H1 (cell line): ENCODE measurements at regions of chr7 and their contacts with region 1.

Region 1: GRCh38 chr7:1193593-1194424 is 33.8 kb upstream of the ZFAND2A start:
- DNase-seq: peak in 1 of 2 experiments; percentile 78
- H3K4me3 ChIP-seq: no peak overlapping the region
- H3K27ac ChIP-seq: no peak overlapping the region
- H3K4me1 ChIP-seq: no peaks in the 10 kb centered on the region
- H3K27me3 ChIP-seq: no peaks in the 10 kb centered on the region
- CTCF ChIP-seq: peak; percentile 75 to 82 (median 76)
- EP300 ChIP-seq: no peak
- POLR2A ChIP-seq: no peak
- RAD21 ChIP-seq: peak; percentile 88 to 89

Region 2: GRCh38 chr7:945556-946255 is 248.1 kb before region 1 on chr7:
- CTCF ChIA-PET with region 1: no interaction called
- POLR2A ChIA-PET with region 1: no interaction called
- DNase-seq: peak; percentile 49 to 86
- H3K4me3 ChIP-seq: peak overlapping the region in 2 of 4 experiments; percentile 11 to 39; a peak in 3 of 8 replicates
- H3K27ac ChIP-seq: peak overlapping the region; percentile 72; the same call in 1 of the 2 replicates
- H3K4me1 ChIP-seq: peaks cover 0 to 26% (median 18%) of the 10 kb centered on the region in 4 experiments; a peak in 6 of 7 replicates
- H3K27me3 ChIP-seq: peaks cover 0 to 4% (median 0%) of the 10 kb centered on the region in 4 experiments; a peak in 2 of 7 replicates
- CTCF ChIP-seq: no peak
- EP300 ChIP-seq: 0 out of 3 replicates have a peak, but pooled peaks of 1 of the 2 experiments have one; percentile 49
- POLR2A ChIP-seq: peak in 1 of 2 experiments; percentile 74; a peak in 2 of 3 replicates
- RAD21 ChIP-seq: 0 out of 4 replicates have a peak, but pooled peaks have one; percentile 1 to 15

Region 3: DNA sequence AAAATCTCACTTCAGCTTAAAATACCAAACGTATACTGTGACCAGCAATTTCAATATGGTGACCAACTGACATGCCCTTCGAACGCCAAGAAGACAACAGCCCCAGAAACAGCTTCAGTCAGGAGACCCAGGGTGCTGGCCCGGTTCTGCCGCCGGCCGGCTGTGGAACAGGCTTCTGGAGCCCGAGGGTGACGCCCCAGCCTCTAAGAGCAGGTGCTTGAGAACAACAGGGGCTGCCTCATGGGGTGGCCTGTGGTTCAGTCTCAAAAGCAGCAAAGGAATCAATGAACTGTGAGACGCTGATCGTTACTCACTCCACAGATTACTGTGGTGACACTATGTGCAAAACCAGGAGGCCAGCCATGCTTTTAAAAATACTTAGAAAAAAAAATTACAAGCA is 88.6 kb before region 1 on chr7:
- CTCF ChIA-PET with region 1: no interaction called
- POLR2A ChIA-PET with region 1: no interaction called
- DNase-seq: no peak
- H3K4me3 ChIP-seq: no peak overlapping the region
- H3K27ac ChIP-seq: no peak overlapping the region
- H3K4me1 ChIP-seq: no peaks in the 10 kb centered on the region
- H3K27me3 ChIP-seq: no peaks in the 10 kb centered on the region
- CTCF ChIP-seq: no peak
- EP300 ChIP-seq: no peak
- POLR2A ChIP-seq: no peak
- RAD21 ChIP-seq: no peak

Region 4: GRCh38 chr7:1151653-1152425 is 42.0 kb before region 1 on chr7:
- CTCF ChIA-PET with region 1: no interaction called
- POLR2A ChIA-PET with region 1: no interaction called
- DNase-seq: no peak
- H3K4me3 ChIP-seq: no peak overlapping the region
- H3K27ac ChIP-seq: no peak overlapping the region
- H3K4me1 ChIP-seq: no peaks in the 10 kb centered on the region
- H3K27me3 ChIP-seq: no peaks in the 10 kb centered on the region
- CTCF ChIP-seq: no peak
- EP300 ChIP-seq: no peak
- POLR2A ChIP-seq: no peak
- RAD21 ChIP-seq: no peak

Region 5: GRCh38 chr7:1181640-1182039 is 12.2 kb before region 1 on chr7:
- CTCF ChIA-PET with region 1: interaction called, 47 read pairs
- POLR2A ChIA-PET with region 1: no interaction called
- DNase-seq: no peak
- H3K4me3 ChIP-seq: no peak overlapping the region
- H3K27ac ChIP-seq: no peak overlapping the region
- H3K4me1 ChIP-seq: no peaks in the 10 kb centered on the region
- H3K27me3 ChIP-seq: no peaks in the 10 kb centered on the region; a peak in 1 of 7 replicates
- CTCF ChIP-seq: no peak
- EP300 ChIP-seq: no peak
- POLR2A ChIP-seq: no peak
- RAD21 ChIP-seq: no peak

Region 6: DNA sequence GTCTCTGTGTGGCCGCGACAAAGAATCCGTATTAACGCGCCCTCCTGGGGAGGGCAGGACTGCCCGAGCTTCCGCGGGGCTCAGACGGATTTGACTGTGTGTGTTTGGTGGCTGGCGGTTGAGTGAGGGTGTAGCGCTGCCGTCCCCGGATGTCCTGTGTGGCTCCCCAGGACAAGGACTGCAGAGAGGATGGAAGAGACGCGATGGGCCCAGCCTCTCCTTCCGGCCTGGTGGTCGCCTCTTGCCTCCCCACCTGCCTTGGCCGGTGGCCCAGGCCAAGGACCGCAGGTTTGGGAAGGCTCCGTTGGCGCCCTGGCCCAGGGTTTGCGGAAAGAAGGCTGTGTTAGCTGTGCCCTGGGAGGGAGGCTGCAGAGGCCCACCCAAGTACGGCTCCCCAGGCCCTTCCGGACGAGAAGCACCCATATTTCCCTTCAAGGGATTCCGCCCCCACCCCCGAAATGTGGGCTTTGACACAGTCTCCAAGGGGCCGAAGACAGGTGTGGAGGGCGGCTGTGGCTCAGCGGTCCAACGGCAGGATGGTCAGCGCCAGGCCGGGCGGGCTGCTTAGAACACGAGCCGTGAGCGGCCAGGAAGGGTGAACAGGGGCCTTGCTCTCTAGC is 41.2 kb after region 1 on chr7:
- CTCF ChIA-PET with region 1: no interaction called
- POLR2A ChIA-PET with region 1: no interaction called
- DNase-seq: peak; percentile 49 to 75
- H3K4me3 ChIP-seq: peak overlapping the region in 2 of 4 experiments; percentile 7 to 10; a peak in 2 of 8 replicates
- H3K27ac ChIP-seq: no peak overlapping the region
- H3K4me1 ChIP-seq: peaks cover 6 to 36% (median 26%) of the 10 kb centered on the region in 4 experiments
- H3K27me3 ChIP-seq: peaks cover 93 to 97% (median 96%) of the 10 kb centered on the region in 4 experiments
- CTCF ChIP-seq: no peak
- EP300 ChIP-seq: no peak
- POLR2A ChIP-seq: no peak
- RAD21 ChIP-seq: no peak

Region 7: GRCh38 chr7:1412322-1413261 is 218.8 kb after region 1 on chr7:
- CTCF ChIA-PET with region 1: interaction called, 11 read pairs
- POLR2A ChIA-PET with region 1: no interaction called
- DNase-seq: peak; percentile 70 to 99
- H3K4me3 ChIP-seq: peak overlapping the region in 3 of 4 experiments; percentile 14 to 42 (median 23); a peak in 5 of 8 replicates
- H3K27ac ChIP-seq: no peak overlapping the region
- H3K4me1 ChIP-seq: peaks cover 0 to 3% (median 1%) of the 10 kb centered on the region in 4 experiments; a peak in 4 of 7 replicates
- H3K27me3 ChIP-seq: peaks cover 0 to 9% (median 8%) of the 10 kb centered on the region in 4 experiments; a peak in 4 of 7 replicates
- CTCF ChIP-seq: peak in 2 of 3 experiments; percentile 83 to 86; a peak in 3 of 4 replicates
- EP300 ChIP-seq: no peak; a peak in 1 of 3 replicates
- POLR2A ChIP-seq: no peak
- RAD21 ChIP-seq: peak; percentile 87 to 90